ENCODE measurements at regions of chr13 and their contacts with region 1.

Region 1: GRCh38 chr13:30465585-30466357 is at the start of gene HMGB1:
- DNase-seq: peak; percentile 99
- H3K4me3 Mint-ChIP-seq: peak within 1 kb of the TSS; percentile 95
- H3K27ac Mint-ChIP-seq: peak within 1 kb of the TSS; percentile 100
- H3K4me1 Mint-ChIP-seq: peaks cover 30% of the 10 kb centered on the region
- H3K27me3 Mint-ChIP-seq: peaks cover 3% of the 10 kb centered on the region
- total RNA-seq, gene HMGB1: 624 and 640 TPM in 2 replicates

Region 2: DNA sequence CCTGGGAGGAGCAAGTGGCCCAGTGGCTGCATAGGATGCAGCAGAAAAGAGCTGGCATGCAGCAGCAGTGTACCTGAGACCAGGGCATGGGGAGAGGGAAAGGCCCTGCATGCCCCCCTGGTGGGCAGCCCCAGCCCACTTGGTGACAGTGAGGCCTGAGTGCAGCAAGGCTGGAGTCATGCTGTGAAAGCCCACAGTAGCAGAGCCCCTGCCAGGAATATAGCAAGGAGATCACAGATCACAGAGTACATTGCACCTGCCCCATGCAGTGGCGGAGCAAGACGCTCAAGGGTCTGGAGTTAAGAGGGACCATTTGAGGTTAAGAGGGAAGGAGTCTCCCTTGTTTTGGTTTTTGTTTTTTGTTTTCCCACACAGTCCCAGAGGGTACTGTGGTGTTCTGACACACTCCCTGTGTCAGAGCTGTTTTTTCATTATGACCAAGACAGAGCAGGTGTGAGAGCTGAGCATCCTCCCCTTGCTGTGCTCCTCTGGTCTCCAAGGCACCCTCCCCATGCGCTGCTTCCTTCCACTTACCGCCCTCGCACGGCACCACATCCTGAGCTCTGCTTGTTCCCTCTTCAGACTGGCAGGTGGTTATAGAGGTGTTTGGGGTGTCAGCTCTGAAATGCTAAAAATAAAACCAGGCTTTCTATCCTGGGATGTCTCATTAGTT is 530.3 kb before region 1 on chr13:
- intact Hi-C with region 1: loop called (anchors 5 kb)
- DNase-seq: peak; percentile 94
- H3K4me3 Mint-ChIP-seq: peak overlapping the region; percentile 87
- H3K27ac Mint-ChIP-seq: peak overlapping the region; percentile 94
- H3K4me1 Mint-ChIP-seq: peaks cover 47% of the 10 kb centered on the region
- H3K27me3 Mint-ChIP-seq: no peaks in the 10 kb centered on the region

Region 3: GRCh38 chr13:30306762-30307193 is 159.0 kb before region 1 on chr13:
- intact Hi-C with region 1: loop called (anchors 1 kb)
- DNase-seq: peak; percentile 98
- H3K4me3 Mint-ChIP-seq: peak overlapping the region; percentile 89
- H3K27ac Mint-ChIP-seq: peak overlapping the region; percentile 87
- H3K4me1 Mint-ChIP-seq: peaks cover 46% of the 10 kb centered on the region
- H3K27me3 Mint-ChIP-seq: no peaks in the 10 kb centered on the region

Region 4: DNA sequence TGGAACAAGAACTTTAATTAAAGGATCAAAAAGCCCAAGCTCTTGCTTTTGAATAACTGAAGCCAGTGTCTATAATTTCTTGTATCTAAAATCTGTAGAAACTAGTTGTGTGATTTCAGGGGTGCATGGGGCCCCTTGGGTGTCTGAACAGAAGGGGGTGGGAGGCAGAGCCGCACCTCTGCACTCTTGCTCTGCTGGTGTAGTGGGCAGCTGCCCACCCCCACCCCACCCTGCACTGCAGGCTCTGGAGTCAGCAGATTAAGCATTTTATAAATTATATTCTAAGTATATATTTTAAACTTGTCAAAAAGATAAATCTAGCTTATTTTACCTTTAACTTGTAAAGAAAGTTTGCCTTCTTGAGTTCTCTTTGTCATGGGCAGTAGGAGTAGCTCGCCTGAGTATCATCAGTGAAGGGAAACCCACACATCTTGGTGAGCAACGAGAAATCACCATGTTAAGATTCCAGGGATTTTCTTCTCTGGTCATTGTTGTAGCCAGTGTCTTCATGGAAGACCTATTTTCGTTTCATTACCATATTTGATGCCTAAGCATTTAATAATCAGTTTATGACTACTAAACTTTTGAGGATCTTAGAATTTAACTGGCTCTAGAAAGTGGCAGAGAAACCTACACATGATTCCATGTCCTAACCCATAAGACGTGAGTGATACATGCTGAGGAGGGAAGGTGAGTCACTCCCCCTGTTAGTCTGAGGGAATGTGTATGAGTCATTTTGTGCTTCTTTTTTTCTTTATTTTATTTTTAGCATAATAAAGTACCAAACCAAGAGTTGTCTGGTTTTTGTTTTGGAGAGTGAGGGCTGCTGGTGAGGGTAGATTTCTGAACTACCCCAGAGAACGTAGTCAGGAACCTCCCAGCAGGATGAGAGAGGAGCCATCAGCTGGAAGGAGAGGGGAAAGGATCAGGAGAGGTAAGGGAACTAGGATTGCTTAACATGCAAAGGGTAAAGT is 35.8 kb before region 1 on chr13:
- intact Hi-C with region 1: loop called (anchors 1 kb)
- DNase-seq: no peak
- H3K4me3 Mint-ChIP-seq: peak overlapping the region; percentile 63
- H3K27ac Mint-ChIP-seq: peak overlapping the region; percentile 91
- H3K4me1 Mint-ChIP-seq: peaks cover 28% of the 10 kb centered on the region
- H3K27me3 Mint-ChIP-seq: no peaks in the 10 kb centered on the region

Region 5: DNA sequence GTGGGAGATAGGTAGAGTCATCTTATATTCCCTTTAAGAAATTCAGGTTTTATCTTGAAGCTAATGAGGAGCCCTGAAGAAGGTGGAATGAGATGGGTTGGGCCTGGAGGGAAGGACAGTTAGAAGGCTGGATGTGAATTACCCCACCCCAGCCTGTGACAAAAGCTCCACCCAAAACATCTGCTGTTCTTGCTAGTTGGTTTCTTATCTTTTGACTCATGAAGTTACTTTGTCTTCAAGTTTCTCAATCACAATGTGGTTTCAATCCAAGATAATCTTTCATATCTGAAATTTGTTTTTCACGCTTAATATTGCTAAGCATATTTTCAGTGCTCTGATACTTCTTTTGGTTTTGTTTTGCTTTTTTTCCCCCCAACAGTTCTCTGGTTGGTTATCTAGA is 38.3 kb after region 1 on chr13:
- intact Hi-C with region 1: no loop called
- DNase-seq: no peak
- H3K4me3 Mint-ChIP-seq: no peak overlapping the region
- H3K27ac Mint-ChIP-seq: no peak overlapping the region
- H3K4me1 Mint-ChIP-seq: peaks cover 13% of the 10 kb centered on the region
- H3K27me3 Mint-ChIP-seq: peaks cover 2% of the 10 kb centered on the region

Region 6: GRCh38 chr13:30585748-30586262 is 120.0 kb after region 1 on chr13:
- intact Hi-C with region 1: no loop called
- DNase-seq: no peak
- H3K4me3 Mint-ChIP-seq: no peak overlapping the region
- H3K27ac Mint-ChIP-seq: no peak overlapping the region
- H3K4me1 Mint-ChIP-seq: peaks cover 6% of the 10 kb centered on the region
- H3K27me3 Mint-ChIP-seq: peaks cover 29% of the 10 kb centered on the region

Region 7: GRCh38 chr13:30617315-30618185 is 151.8 kb after region 1 on chr13 and contains the start of gene USPL1:
- intact Hi-C with region 1: loop called (anchors 1 kb)
- DNase-seq: peak; percentile 100
- H3K4me3 Mint-ChIP-seq: no peak within 1 kb of the TSS
- H3K27ac Mint-ChIP-seq: no peak within 1 kb of the TSS
- H3K4me1 Mint-ChIP-seq: peaks cover 30% of the 10 kb centered on the region
- H3K27me3 Mint-ChIP-seq: no peaks in the 10 kb centered on the region
- total RNA-seq, gene USPL1: 16.2 and 18.7 TPM in 2 replicates

Region 8: GRCh38 chr13:30802953-30803478 is 337.2 kb after region 1 on chr13:
- intact Hi-C with region 1: loop called (anchors 1 kb)
- DNase-seq: peak; percentile 94
- H3K4me3 Mint-ChIP-seq: peak overlapping the region; percentile 65
- H3K27ac Mint-ChIP-seq: no peak overlapping the region
- H3K4me1 Mint-ChIP-seq: peaks cover 18% of the 10 kb centered on the region
- H3K27me3 Mint-ChIP-seq: no peaks in the 10 kb centered on the region

Measured in activated CD4-positive, alpha-beta T cell treated with anti-CD3 and anti-CD28 coated beads, Interleukin-2, amount 10 ng/mL, durations not matched to agents 24 days and 14 days (primary cell).